Cardiac septum (tissue), 1 donor: ENCODE measurements at regions of chr1 and their contacts with region 1.

Region 1: DNA sequence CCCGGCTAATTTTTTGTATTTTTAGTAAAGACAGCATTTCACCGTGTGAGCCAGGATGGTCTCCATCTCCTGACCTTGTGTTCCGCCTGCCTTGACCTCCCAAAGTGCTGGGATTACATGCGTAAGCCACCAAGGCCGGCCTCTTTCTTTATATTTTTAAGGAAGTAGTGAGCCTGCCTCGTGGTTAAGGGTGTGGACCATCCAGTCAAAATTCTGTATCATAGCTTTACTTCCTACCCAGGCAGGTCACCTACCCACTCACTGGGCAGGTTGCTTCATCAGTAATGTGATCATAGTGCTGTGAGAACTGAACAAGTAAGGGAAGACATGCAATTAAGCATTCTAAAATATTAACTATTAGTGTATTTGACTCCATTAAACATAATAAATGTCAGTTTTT is 8.1 kb upstream of the ACOT7 start:
- DNase-seq: no peak

Region 2: DNA sequence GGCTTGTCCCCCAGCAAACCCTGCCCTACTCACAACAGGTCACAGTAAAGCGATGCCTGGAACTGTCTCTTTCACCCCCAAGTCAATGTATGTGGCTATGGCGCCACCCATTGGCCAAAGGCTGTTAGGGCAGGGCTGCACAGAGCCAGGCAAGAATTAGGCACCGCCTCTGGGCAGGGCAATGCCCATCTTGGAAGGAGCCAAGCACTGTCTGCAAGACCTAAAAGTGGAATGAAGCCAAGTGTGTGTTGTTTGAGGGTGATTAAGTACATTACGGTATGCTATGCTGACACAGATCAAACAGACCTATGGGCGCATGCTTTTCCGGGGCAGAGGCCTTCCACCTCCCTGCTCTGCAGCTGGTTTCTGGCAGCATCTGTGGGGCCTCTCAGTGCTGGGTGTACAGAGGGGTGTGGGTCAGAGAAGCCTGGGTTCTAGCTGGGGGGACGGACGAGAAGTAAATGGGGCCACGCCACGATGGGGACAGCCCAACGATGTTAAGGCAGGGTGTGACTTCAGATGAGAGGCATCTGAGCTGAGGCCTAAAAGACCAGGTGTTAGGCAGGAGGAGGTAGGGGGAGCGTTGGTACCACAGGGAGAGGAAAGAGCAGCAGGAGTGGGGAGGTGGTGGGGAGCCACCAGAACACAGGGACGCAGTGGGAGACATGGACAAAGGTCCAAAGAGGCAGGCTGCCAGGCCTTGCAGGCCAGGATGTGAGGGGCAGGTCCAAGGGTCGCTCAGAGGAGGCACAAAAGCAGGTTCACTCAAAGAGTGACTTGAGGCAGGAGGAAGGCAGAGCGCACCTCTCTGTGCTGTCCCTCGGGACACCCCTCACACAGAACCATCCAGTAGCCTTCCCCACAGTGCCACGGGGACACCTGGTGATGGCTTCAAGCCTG is 57.9 kb before region 1 on chr1:
- intact Hi-C with region 1: loop called (anchors 5 kb)
- DNase-seq: no peak

Region 3: DNA sequence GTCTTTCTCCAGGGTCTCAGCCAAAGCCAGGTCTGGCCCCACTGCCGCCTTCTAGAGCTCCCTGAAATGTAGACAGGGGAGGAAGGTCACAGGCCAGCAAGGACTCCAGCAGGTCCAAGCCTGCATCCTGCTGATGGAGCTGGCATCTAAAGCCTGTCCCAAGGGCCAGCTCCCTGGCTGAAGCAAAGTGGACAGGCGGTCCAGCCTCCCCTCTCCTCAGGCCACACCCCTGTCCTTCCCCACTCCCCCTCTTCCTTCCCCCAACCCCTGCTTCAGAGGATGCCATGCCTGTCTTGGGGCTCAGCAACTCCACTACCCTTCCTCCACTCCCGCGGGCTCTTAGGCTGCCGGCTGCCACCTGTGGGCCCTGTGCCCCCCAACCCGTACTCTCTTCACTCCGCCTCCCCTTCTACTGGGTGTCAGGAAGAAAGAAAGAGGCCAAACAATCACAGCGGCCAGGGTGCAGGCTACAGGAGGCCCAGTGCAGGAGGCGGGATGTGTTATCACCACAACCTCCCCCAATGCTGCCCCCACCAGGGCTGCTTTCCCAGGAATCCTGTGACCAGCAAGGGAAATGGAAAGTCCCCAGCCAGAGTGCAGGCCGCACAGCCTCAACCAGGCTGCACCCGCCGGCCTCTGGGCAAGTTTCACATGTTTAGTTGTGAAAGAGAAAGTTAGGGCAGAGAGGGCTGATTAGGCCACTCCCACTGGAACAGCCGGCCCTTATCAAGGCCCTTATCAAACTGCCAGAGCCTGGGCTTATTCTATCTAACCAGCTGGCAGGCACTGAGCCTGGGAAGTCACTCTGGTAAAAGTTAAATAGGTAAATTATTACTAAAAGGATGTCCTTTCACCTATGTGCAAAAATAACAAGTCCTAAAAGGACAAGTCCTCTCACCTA is 42.2 kb before region 1 on chr1:
- intact Hi-C with region 1: loop called (anchors 2 kb)
- DNase-seq: peak; percentile 83

Region 4: DNA sequence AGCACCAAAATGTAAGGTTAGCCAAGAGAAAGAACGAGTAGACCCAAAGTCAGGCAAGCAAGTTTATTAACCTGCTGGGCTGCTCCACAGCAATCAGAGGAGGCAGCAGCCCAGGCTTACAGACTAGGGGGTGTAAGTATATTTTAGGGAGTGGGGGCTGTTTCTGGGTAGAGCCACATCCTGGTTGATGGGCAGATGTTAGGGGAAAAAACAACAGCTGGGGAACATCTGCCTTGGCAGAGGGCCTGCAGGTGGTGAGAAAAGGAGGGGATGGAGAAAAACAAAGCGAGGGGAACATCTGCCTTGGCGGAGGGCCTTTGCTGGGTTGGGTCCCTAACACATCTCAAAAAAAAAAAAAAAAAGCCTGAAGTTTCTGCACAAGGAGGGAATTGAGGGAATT is 168.4 kb after region 1 on chr1:
- intact Hi-C with region 1: no loop called
- DNase-seq: no peak